Gastrocnemius medialis (tissue), 4 donors: ENCODE measurements at regions of chr1 and their contacts with region 1.

Region 1: GRCh38 chr1:41045740-41046139 is 24.2 kb upstream of the SLFNL1 start:
- DNase-seq: peak; percentile 71 to 88
- ATAC-seq: peak; percentile 98 to 99
- H3K4me3 ChIP-seq: peak overlapping the region in 3 of 4 donors; percentile 4 to 22 (median 10)
- H3K27ac ChIP-seq: peak overlapping the region; percentile 85 to 93 (median 90)
- H3K4me1 ChIP-seq: peaks cover 32 to 36% of the 10 kb centered on the region in 2 donors
- H3K27me3 ChIP-seq: no peaks in the 10 kb centered on the region
- CTCF ChIP-seq: no peak
- POLR2A ChIP-seq: no peak

Region 2: DNA sequence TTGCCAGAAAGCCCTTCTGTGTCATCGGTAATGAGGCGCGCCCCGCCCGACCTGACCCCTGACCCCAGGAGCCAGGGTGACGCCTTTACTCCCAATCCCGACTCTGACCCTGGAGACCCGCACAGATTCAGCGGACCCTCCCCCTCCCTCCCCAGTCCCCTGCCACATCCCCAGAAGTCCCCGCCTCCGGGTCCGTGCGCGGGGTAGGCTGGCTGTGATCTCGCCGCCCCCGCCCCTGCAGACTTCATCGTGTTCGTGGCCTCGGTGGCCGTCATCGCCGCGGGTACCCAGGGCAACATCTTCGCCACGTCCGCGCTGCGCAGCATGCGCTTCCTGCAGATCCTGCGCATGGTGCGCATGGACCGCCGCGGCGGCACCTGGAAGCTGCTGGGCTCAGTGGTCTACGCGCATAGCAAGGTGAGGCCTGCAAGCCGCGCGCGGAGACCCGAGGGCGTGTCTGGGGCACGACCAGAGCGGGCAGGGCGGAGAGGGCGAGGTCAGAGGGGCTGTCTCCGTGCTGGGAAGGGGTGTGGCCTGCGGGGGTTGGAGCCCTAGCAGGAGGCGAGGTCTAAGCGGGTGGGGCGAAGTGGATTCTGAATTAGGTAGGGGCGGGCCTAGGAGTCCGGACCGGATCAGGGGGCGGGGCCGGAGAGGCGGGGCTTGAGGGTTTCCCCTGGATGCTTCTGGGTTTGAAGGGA is 227.3 kb before region 1 on chr1:
- in situ Hi-C with region 1: no loop called
- intact Hi-C with region 1: no loop called
- DNase-seq: no peak
- ATAC-seq: no peak
- H3K4me3 ChIP-seq: peak overlapping the region; percentile 21 to 36 (median 27)
- H3K27ac ChIP-seq: no peak overlapping the region
- H3K4me1 ChIP-seq: peaks cover 0 to 10% of the 10 kb centered on the region in 2 donors
- H3K27me3 ChIP-seq: no peaks in the 10 kb centered on the region
- CTCF ChIP-seq: no peak
- POLR2A ChIP-seq: no peak

Region 3: DNA sequence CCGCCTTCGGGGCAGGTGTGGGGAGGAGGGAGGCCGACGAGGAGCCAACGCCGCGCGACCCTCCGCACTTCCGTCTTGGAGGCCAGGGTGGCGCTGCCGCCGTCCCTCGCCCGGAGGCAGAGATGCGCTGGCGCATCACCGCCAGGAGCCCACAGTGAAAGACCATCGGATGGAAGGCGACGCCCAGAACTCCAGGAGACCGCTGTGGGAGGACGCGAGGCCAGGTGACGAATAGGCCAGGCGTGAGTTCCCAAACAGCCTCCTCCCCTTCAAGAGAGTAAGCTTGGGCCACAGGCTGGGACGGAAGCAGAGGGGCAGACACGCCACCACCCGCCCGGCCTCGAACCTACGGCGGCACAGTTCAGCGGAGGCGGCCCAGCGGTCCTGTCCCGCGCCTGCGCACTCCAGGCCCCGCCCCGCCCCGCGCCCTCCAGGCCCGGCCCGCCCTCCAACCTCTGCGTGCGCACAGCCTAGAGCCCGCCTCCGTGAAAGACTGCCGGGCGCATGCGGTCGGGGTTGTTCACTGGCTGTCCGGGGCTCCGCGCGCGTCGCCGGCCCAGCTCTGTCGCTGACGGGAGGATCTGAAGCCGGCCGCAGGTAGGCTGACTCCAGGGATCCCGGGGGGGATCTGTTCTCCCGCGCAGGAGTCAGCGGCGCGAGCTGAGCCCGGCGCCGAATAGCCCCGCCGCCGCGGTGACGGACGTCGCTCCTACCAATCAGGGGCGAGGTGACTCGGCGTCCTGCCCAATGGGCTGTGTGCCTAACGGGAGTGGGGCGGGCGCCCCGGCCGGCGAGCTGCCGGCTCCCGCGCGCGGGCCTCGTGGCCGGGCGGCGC is 66.3 kb before region 1 on chr1 and contains the start of gene CTPS1:
- in situ Hi-C with region 1: no loop called
- intact Hi-C with region 1: loop called (anchors 5 kb)
- DNase-seq: peak; percentile 91 to 93
- ATAC-seq: peak; percentile 97 to 98
- H3K4me3 ChIP-seq: peak within 1 kb of the TSS; percentile 65 to 93 (median 76)
- H3K27ac ChIP-seq: peak within 1 kb of the TSS; percentile 86 to 98 (median 95)
- H3K4me1 ChIP-seq: peaks cover 11 to 14% of the 10 kb centered on the region in 2 donors
- H3K27me3 ChIP-seq: no peaks in the 10 kb centered on the region
- CTCF ChIP-seq: no peak
- POLR2A ChIP-seq: peak; percentile 72 to 80
- total RNA-seq, gene CTPS1: 9.5 to 24.3 (median 14.7) TPM

Region 4: GRCh38 chr1:41023279-41023990 is 22.3 kb before region 1 on chr1:
- in situ Hi-C with region 1: no loop called
- intact Hi-C with region 1: no loop called
- DNase-seq: no peak
- ATAC-seq: no peak
- H3K4me3 ChIP-seq: no peak overlapping the region
- H3K27ac ChIP-seq: no peak overlapping the region
- H3K4me1 ChIP-seq: no peaks in the 10 kb centered on the region
- H3K27me3 ChIP-seq: no peaks in the 10 kb centered on the region
- CTCF ChIP-seq: no peak
- POLR2A ChIP-seq: no peak

Region 5: GRCh38 chr1:41101950-41102607 is 56.3 kb after region 1 on chr1:
- in situ Hi-C with region 1: no loop called
- intact Hi-C with region 1: loop called (anchors 2 kb)
- DNase-seq: peak; percentile 71 to 87
- ATAC-seq: peak; percentile 96 to 99
- H3K4me3 ChIP-seq: peak overlapping the region in 1 of 4 donors; percentile 24
- H3K27ac ChIP-seq: peak overlapping the region; percentile 35 to 66 (median 59)
- H3K4me1 ChIP-seq: peaks cover 27 to 31% of the 10 kb centered on the region in 2 donors
- H3K27me3 ChIP-seq: no peaks in the 10 kb centered on the region
- CTCF ChIP-seq: no peak
- POLR2A ChIP-seq: no peak

Region 6: DNA sequence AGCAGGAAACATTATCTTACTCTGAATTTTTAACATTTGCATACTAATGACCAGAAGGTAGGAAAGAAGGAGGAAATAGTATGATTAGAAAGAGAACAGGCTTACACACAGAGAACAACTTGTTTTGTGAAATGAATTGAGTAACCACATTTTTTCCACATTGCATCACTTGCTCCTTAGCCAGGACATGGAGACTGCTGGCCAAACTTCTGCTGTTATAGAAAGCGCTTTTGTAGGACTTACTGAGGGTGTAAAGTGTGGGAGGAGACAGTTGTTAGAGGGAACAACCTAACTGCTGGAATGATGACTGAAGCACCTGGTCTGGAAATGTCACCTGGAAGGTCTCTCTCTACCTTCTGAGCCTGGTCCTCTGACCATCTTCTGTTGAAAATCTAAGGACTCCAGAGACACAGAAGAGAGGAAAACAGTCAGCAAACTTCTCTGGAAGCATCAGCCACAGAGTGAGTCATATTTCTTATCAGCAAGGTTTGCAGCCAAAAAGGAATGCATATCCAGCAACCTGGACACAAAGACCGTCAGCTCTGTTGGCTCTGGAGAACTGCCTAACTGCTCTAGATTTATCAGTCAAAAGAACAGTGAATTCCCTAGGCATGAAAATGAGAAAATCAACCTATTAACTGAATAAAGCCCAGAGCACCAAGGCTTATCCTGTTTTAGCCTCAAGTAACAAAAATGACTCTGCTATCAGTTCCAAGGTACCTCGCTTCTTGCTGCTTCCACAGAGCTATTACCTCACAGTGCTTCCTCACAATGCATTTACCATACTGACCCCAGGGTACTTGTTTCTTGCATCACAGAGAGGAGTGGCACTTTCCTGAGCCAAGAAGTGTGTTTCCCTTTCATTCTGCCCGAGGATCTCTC is 63.8 kb after region 1 on chr1:
- in situ Hi-C with region 1: no loop called
- intact Hi-C with region 1: loop called (anchors 1 kb)
- DNase-seq: peak; percentile 24 to 55
- ATAC-seq: peak; percentile 94 to 95
- H3K4me3 ChIP-seq: peak overlapping the region in 2 of 4 donors; percentile 4 to 9
- H3K27ac ChIP-seq: peak overlapping the region; percentile 76 to 87 (median 82)
- H3K4me1 ChIP-seq: peaks cover 26 to 30% of the 10 kb centered on the region in 2 donors
- H3K27me3 ChIP-seq: no peaks in the 10 kb centered on the region
- CTCF ChIP-seq: no peak
- POLR2A ChIP-seq: peak in 1 of 2 donors; percentile 9

Region 7: GRCh38 chr1:41200728-41201127 is 155.0 kb after region 1 on chr1:
- in situ Hi-C with region 1: no loop called
- intact Hi-C with region 1: no loop called
- DNase-seq: no peak
- ATAC-seq: no peak
- H3K4me3 ChIP-seq: no peak overlapping the region
- H3K27ac ChIP-seq: no peak overlapping the region
- H3K4me1 ChIP-seq: peaks cover 7 to 9% of the 10 kb centered on the region in 2 donors
- H3K27me3 ChIP-seq: no peaks in the 10 kb centered on the region
- CTCF ChIP-seq: no peak
- POLR2A ChIP-seq: no peak

Region 8: DNA sequence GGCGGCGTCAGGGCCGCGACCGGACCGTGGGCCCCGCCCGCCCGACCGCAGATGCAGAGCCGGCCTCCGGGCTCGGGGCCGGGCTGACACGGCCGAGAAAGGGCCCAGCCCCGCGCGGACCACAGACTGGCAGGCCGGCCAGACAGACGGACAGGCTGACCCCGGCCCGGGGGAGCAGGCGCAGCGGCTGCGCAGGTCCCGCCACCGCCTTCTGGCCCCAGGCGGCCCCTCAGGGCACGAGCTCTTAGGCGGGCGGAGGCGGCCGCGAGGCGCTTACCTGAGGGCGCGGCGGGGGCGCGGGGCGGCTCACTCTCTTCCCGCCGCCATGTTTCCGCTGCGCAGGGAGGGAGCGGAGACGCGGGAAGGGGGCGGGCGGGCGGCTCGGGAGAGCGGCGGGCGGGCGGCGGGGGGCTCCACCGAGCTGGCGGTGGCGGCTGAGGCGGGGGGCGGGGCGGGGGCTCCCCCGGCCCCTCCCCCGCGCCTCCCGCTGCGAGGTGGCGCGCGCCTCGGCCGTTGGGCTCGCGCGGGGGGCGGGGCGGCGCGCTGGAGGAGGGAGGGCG is 196.1 kb after region 1 on chr1 and contains the start of gene SCMH1:
- in situ Hi-C with region 1: loop called in 1 of 4 experiments (anchors 25 kb)
- intact Hi-C with region 1: no loop called
- DNase-seq: peak; percentile 4 to 25
- ATAC-seq: peak; percentile 69 to 70
- H3K4me3 ChIP-seq: peak within 1 kb of the TSS; percentile 67 to 93 (median 82)
- H3K27ac ChIP-seq: peak within 1 kb of the TSS; percentile 81 to 98 (median 92)
- H3K4me1 ChIP-seq: peaks cover 7 to 22% of the 10 kb centered on the region in 2 donors
- H3K27me3 ChIP-seq: no peaks in the 10 kb centered on the region
- CTCF ChIP-seq: no peak
- POLR2A ChIP-seq: no peak
- total RNA-seq, gene SCMH1: 17.1 to 29.4 (median 25.5) TPM